ENCODE measurements at regions of chr1 and their contacts with region 1.

Region 1: DNA sequence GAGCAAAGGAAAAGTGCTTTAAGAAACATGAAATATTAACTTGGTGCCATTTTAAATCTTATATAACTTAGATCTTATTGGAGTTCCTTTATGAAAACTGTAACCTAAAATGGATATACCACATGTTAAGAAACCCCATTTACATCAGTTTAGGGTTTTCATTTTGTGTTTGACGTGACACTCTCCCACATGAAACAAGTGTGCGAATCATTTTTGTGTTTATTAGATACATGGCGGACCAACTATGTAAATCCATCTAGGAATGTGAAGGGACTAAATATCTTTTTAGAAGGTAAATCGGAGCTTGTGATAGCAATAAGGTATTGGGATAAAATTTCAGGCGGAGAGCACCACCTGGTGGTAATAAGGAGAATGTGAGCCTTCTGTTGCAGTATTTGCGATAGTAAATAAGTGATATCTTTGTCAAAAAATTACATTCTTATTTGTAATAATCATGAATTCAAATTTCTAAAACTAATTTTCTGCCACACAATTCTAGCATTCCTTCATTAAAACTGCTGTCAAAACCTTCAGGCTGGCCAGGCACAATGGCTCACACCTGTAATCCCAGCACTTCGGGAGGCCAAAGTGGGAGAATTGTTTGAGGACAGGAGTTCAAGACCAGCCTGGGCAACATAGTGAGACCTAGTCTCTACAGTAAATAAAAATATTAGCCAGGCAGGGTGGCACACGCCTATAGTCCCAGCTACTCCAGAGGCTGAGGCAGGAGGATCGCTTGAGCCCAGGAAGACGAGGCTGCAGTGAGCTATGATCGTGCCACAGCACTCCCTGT is 31.3 kb downstream of the SMAP2 start:
- DNase-seq: no peak
- ATAC-seq: peak; percentile 67

Region 2: DNA sequence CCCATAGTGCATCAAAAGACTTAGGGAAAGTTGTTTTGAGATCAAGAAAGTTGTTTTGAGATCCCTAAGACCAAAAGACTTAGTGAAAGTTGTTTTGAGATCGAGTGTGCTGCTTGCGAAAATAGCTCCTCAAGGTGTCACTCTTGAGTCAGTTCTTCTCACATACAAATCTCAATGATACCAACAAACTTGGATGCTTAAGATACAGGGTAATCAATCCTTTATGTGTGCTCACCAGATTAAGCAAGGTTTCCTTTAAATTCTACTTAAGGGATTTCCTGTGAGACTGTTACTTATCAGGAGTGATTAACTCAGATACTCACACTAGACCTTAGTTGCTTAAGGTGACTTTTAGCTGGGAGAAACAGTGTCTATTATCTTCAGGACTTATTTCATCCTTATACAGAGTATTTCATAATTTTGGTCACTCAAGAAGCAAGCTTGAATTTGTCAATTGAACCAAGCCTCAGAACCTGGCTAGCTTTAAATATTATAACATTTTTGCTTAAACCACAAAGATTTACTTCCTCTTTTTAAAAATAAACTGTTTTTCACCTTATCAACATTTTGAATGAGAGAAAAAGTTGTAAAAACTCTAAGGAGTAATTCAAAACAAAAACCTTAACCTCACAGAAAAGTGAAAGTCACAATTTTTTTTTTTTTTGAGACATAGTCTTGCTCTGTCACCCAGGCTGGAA is 251.6 kb before region 1 on chr1:
- intact Hi-C with region 1: loop called (anchors 5 kb)
- DNase-seq: no peak
- ATAC-seq: peak; percentile 57

Region 3: DNA sequence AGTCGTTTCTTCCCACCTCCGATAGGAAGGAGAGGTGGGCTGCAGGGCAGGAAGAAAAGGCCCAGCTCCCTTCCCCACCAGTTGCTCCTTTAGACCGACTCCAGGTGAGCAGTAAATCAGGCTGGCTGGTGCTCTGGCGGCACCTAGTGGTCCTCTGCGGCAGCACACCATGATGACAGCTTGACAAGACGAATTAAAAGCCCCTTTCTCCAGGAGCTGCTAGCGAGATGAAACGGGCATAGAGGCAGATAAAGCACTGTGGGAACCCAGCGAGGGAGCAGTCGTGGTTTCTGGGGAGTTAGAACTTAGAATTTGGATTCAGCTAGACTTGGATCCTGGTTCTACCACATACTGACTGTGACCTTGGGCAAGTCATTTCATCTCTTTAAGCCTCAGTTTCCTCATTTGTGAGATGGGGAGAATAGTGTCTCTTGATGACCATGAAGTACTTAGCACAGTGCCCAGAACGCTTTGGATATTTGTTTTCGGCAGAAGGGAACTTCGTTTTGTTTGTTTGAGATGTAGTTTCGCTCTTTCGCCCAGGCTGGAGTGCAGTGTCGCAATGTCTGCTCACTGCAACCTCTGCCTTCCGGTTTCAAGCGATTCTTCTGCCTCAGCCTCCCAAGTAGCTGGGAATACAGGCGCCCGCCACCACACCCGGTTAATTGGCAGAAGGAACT is 66.0 kb before region 1 on chr1:
- intact Hi-C with region 1: no loop called
- DNase-seq: peak; percentile 87
- ATAC-seq: peak; percentile 91